ENCODE measurements at regions of chr6 and their contacts with region 1.

Region 1: DNA sequence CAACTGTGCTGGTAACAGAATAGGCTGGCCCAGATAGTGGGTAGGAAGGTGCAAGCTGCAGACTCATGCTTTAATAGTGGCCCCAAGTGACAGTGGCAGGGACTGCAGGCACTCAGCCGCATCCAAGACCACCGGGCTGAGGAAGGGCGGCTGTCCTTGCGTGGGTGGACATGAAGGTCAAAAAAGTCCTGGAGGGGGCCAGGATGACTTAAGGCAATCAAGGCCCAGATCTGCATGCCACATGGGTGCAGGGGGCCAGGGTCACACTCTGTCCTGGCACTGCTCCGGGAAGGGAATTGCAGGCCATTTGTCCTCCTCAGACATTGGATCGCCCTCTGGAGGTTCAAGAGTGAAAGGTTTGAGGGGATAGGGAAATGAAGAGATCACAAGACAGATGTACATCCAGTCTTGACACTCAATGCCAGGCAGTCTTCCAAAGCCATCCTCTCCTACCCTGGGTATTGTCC is 10.4 kb upstream of the VNN2 start:
- DNase-seq: peak; percentile 19 to 67 (median 48)
- ATAC-seq: peak; percentile 92 to 97 (median 96)
- H3K4me3 ChIP-seq: no peak overlapping the region
- H3K27ac ChIP-seq: no peak overlapping the region
- H3K4me1 ChIP-seq: peaks cover 0 to 13% (median 4%) of the 10 kb centered on the region in 3 donors
- H3K27me3 ChIP-seq: no peaks in the 10 kb centered on the region
- CTCF ChIP-seq: peak in 3 of 4 donors; percentile 54 to 84 (median 70)

Region 2: DNA sequence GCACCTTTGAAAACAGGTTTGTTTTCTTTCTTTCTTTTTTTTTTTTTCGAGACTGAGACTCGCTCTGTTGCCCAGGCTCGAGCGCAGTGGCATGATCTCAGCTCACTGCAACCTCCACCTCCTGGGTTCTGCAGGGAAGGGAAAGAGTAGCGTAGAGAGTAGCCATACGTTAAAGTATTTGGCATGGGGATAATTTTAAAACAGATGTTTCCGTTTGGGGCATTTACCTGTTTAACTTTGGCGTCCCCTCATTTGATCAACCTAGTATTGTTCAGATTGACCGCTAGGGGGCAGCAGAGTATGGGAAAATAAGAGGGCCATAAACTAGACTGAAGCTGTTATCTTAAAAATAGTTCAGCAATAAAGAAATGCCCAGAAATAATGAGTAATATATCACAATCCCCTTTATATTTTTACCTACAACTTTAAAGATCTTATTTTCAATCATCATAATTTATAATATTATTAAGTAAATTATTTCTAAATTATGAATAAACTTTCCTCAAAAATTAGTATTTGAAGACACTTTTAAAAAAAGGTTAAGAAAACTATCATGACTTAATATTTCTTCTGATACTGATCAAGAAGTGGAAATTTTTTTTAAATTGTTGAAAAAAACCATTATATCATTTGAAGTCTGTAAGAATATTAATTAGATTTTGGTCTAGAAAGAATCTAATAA is 237.7 kb before region 1 on chr6:
- intact Hi-C with region 1: loop called in 1 of 3 experiments (anchors 10 kb)
- DNase-seq: peak in 4 of 6 donors; percentile 45 to 68 (median 56)
- ATAC-seq: peak; percentile 85 to 94 (median 92)
- H3K4me3 ChIP-seq: peak overlapping the region in 1 of 4 donors; percentile 24
- H3K27ac ChIP-seq: no peak overlapping the region
- H3K4me1 ChIP-seq: no peaks in the 10 kb centered on the region
- H3K27me3 ChIP-seq: peaks cover 0 to 7% (median 0%) of the 10 kb centered on the region in 4 donors
- CTCF ChIP-seq: peak; percentile 80 to 89 (median 84)

Region 3: DNA sequence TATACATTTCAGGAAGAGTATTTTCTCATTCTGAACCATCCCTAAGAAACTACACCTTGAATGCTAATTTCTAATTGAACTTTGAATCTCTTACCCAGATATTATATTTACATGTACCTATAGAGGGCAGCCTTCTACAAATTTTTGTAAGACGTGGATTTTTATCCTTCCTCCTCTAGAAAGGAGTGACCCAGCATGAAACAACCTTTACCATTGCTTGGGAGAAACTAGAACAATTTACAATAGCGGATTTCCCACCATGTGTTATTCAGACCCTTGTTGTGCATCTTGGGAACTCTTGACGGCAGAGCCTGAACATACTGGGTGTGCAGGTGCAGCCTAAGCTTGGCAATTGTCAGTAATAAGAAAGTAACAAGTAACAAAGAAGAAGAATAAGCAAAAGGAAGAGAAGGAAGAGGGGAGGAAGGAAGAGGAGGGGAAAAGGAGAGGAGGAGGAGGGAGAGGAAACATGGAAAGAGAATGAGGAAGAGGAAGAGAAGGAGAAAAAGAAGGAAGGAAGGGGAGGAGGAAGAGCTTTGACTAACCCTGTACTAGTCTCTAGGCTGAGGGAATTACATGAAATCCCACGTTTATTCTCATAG is 98.3 kb before region 1 on chr6:
- intact Hi-C with region 1: loop called in 2 of 3 experiments (anchors 10 kb)
- DNase-seq: no peak
- ATAC-seq: peak; percentile 50 to 95 (median 93)
- H3K4me3 ChIP-seq: no peak overlapping the region
- H3K27ac ChIP-seq: peak overlapping the region in 1 of 4 donors; percentile 47
- H3K4me1 ChIP-seq: peaks cover 0 to 17% (median 12%) of the 10 kb centered on the region in 3 donors
- H3K27me3 ChIP-seq: no peaks in the 10 kb centered on the region
- CTCF ChIP-seq: peak in 3 of 4 donors; percentile 7 to 40 (median 30)

Region 4: DNA sequence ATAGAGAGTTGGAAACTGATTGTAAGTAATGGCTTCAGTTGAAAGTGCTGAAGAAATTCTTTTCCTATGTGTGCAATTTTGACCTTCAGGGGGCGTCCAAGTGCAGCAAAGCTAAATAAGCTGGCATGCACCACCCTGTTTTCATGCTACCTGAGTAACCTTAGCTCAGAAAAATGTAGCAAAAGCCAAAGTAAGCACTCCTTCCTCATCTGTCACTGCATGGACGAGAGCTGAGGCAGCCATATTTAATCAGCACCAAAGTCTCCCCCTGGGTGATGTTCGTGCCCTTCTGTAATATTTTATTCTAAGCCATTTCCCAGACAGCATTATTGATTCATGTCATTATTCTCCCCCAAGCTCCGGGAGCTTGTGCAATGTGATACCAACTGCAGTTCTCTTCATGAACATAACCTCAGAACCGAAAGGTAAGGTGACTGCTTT is 169.4 kb after region 1 on chr6:
- intact Hi-C with region 1: no loop called
- DNase-seq: peak in 5 of 6 donors; percentile 53 to 70 (median 62)
- ATAC-seq: peak; percentile 84 to 98 (median 92)
- H3K4me3 ChIP-seq: no peak overlapping the region
- H3K27ac ChIP-seq: peak overlapping the region in 2 of 4 donors; percentile 37 to 44
- H3K4me1 ChIP-seq: no peaks in the 10 kb centered on the region
- H3K27me3 ChIP-seq: no peaks in the 10 kb centered on the region
- CTCF ChIP-seq: peak; percentile 20 to 53 (median 36)

Measured in pancreas (tissue), 10 donors.